Kidney (tissue), 22 donors: ENCODE measurements at regions of chr18 and their contacts with region 1.

Region 1: DNA sequence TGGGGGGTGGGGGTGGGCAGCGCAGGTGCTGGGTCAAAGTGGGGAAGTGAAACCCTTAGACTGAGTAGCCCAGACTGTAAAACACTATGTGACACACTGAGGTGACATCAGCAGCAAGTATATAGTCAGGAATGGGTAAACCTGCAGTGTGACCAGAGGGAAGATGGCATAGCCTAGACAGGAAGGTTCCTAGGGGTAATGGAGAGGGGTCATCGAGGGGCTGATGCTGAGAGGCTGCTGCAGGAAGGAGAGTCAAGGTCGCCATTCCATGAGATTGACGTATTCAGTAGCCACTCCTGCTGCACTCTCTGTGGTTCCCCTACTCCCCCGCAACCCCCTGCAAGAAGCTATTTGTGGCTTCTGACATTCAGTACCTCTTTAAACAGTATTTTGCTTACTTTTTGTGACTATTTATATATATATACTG is 111.7 kb downstream of the CHST9 start:
- DNase-seq: peak in 1 of 5 donors; percentile 19
- H3K4me3 ChIP-seq: no peak overlapping the region
- H3K27ac ChIP-seq: no peak overlapping the region
- H3K4me1 ChIP-seq: no peaks in the 10 kb centered on the region
- H3K27me3 ChIP-seq: no peaks in the 10 kb centered on the region
- CTCF ChIP-seq: no peak

Region 2: DNA sequence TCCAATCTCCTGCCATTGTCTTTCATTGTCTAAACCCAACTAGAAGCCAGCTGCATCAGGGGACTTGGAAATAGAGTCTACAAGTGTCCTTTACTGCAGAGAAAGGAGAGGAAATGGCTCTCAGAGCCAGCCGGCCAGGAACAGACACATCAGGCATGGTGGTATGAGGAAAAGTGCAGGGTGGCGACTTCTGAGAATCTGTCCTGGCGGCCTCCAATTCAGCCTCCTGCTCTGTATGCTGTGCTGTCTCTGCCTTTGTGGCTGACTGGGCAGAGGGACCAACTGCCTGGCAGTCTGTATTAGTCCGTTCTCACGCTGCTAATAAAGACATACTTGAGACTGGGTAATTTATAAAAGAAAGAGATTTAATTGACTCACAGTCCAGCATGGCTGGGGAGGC is 171.1 kb before region 1 on chr18:
- intact Hi-C with region 1: no loop called
- DNase-seq: no peak
- H3K4me3 ChIP-seq: no peak overlapping the region
- H3K27ac ChIP-seq: no peak overlapping the region
- H3K4me1 ChIP-seq: no peaks in the 10 kb centered on the region
- H3K27me3 ChIP-seq: no peaks in the 10 kb centered on the region
- CTCF ChIP-seq: no peak

Region 3: DNA sequence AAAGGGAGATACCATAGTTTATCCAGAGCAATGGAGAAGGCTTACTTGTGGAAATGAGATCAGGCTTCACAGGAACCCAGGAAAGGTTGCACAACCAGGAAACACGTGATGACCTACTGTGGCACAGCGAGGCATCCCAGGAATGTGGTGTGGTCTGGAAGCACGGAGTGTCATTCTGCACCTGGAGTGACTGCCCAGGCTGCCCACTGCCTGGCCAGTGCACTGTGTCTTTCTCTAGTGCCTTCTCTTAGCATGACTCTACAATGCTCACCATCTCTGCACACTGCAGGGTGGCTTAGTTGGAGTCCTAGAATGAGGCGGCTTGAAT is 62.8 kb after region 1 on chr18:
- intact Hi-C with region 1: loop called (anchors 10 kb)
- DNase-seq: peak in 1 of 5 donors; percentile 78
- H3K4me3 ChIP-seq: no peak overlapping the region
- H3K27ac ChIP-seq: peak overlapping the region in 1 of 2 donors; percentile 57
- H3K4me1 ChIP-seq: peaks cover 0 to 13% (median 3%) of the 10 kb centered on the region in 3 donors
- H3K27me3 ChIP-seq: no peaks in the 10 kb centered on the region
- CTCF ChIP-seq: no peak